Activated T-helper 2 cell treated with anti-CD3 and anti-CD28 coated beads, Interferon-gamma antibody, Interleukin-2, Interleukin-4, amounts not matched to agents 10 μg/mL and 5 μg/mL and 100 μg/mL, durations not matched to agents 14 hours and 24 hours and 36 hours (primary cell): ENCODE measurements at regions of chr10 and their contacts with region 1.

Region 1: GRCh38 chr10:30701451-30702173 is 72.1 kb upstream of the LYZL2 start:
- DNase-seq: peak; percentile 77
- H3K4me3 Mint-ChIP-seq: peak overlapping the region; percentile 72
- H3K27ac Mint-ChIP-seq: peak overlapping the region; percentile 95
- H3K4me1 Mint-ChIP-seq: peaks cover 77% of the 10 kb centered on the region
- H3K27me3 Mint-ChIP-seq: no peaks in the 10 kb centered on the region

Region 2: GRCh38 chr10:30687698-30688219 is 13.9 kb before region 1 on chr10:
- intact Hi-C with region 1: loop called (anchors 1 kb)
- DNase-seq: peak; percentile 62
- H3K4me3 Mint-ChIP-seq: no peak overlapping the region
- H3K27ac Mint-ChIP-seq: peak overlapping the region; percentile 92
- H3K4me1 Mint-ChIP-seq: peaks cover 75% of the 10 kb centered on the region
- H3K27me3 Mint-ChIP-seq: no peaks in the 10 kb centered on the region

Region 3: GRCh38 chr10:30736685-30737232 is 35.1 kb after region 1 on chr10:
- intact Hi-C with region 1: loop called (anchors 2 kb)
- DNase-seq: peak; percentile 32
- H3K4me3 Mint-ChIP-seq: no peak overlapping the region
- H3K27ac Mint-ChIP-seq: peak overlapping the region; percentile 87
- H3K4me1 Mint-ChIP-seq: peaks cover 31% of the 10 kb centered on the region
- H3K27me3 Mint-ChIP-seq: no peaks in the 10 kb centered on the region

Region 4: GRCh38 chr10:31707093-31708039 is 1005.8 kb after region 1 on chr10:
- intact Hi-C with region 1: loop called (anchors 5 kb)
- DNase-seq: peak; percentile 38
- H3K4me3 Mint-ChIP-seq: peak overlapping the region; percentile 33
- H3K27ac Mint-ChIP-seq: peak overlapping the region; percentile 88
- H3K4me1 Mint-ChIP-seq: peaks cover 26% of the 10 kb centered on the region
- H3K27me3 Mint-ChIP-seq: no peaks in the 10 kb centered on the region